Activated CD4-positive, alpha-beta memory T cell treated with anti-CD3 and anti-CD28 coated beads for 36 hours (primary cell): ENCODE measurements at regions of chr3 and their contacts with region 1.

Region 1: GRCh38 chr3:3126477-3127431 is at the start of gene TRNT1:
- DNase-seq: peak; percentile 97
- H3K4me3 Mint-ChIP-seq: peak within 1 kb of the TSS; percentile 97
- H3K27ac Mint-ChIP-seq: peak within 1 kb of the TSS; percentile 99
- H3K4me1 Mint-ChIP-seq: peaks cover 31% of the 10 kb centered on the region
- H3K27me3 Mint-ChIP-seq: no peaks in the 10 kb centered on the region
- total RNA-seq, gene TRNT1: 51.5 to 53.6 TPM

Region 2: GRCh38 chr3:3165241-3165640 is 38.5 kb after region 1 on chr3:
- CTCF ChIA-PET with region 1: no interaction called
- POLR2A ChIA-PET with region 1: no interaction called
- intact Hi-C with region 1: loop called (anchors 1 kb)
- DNase-seq: peak; percentile 57
- H3K4me3 Mint-ChIP-seq: no peak overlapping the region
- H3K27ac Mint-ChIP-seq: peak overlapping the region; percentile 86
- H3K4me1 Mint-ChIP-seq: peaks cover 62% of the 10 kb centered on the region
- H3K27me3 Mint-ChIP-seq: no peaks in the 10 kb centered on the region

Region 3: DNA sequence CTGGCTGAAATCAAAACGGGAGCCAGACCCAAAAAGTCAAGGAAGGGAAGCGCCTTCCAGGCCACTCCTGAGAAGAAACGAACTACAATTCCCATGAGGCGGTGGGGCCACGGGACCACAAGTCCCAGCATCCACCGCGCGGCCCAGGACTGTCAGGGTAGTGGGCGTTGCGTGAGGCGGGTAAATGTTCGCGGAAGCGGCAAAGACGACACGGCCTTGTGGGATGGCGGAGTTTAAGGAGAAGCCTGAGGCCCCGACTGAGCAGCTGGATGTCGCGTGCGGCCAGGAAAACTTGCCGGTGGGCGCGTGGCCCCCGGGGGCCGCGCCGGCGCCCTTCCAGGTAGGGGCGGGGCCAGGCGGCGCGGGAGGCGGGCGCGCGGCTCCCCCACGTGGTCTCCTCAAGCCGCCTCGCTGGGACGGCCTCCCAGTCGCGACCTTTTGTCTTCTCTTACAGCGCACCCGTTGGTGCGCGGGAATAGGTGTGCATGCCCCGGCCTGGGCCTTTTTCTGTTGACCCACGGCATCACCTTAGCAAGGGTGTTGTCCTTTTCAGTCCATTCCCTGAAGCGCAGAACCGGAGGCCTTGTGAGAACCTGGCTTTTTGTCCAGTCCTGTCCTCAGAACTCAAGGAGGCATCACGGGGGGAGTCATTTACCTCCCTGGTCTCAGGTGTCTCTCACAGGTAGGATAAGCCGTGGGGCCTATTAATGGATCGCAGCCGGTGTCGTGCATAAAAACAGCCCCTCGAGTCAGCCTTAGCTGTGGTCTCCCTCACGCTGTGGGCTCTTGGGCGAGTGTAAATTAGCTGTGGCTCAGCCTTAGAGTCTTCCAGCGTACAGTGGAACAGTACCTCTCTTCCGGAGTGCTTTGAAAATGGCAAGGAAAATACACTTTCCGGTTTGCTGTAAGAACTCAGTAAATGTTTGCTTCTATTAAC is 1176.7 kb after region 1 on chr3 and contains the start of gene SETMAR:
- CTCF ChIA-PET with region 1: no interaction called
- POLR2A ChIA-PET with region 1: no interaction called
- intact Hi-C with region 1: loop called (anchors 5 kb)
- DNase-seq: peak; percentile 91
- H3K4me3 Mint-ChIP-seq: peak within 1 kb of the TSS; percentile 93
- H3K27ac Mint-ChIP-seq: peak within 1 kb of the TSS; percentile 96
- H3K4me1 Mint-ChIP-seq: peaks cover 23% of the 10 kb centered on the region
- H3K27me3 Mint-ChIP-seq: no peaks in the 10 kb centered on the region
- total RNA-seq, gene SETMAR: 11.7 to 13.8 TPM